BJ (cell line): ENCODE measurements at regions of chr9 and their contacts with region 1.

Region 1: GRCh38 chr9:134648701-134649535 is 7.3 kb downstream of the COL5A1 start:
- DNase-seq: no peak
- H3K4me3 ChIP-seq: no peak overlapping the region
- H3K27me3 ChIP-seq: no peaks in the 10 kb centered on the region
- CTCF ChIP-seq: no peak

Region 2: GRCh38 chr9:134660407-134660806 is 11.5 kb after region 1 on chr9:
- CTCF ChIA-PET with region 1: interaction called, 12 read pairs
- POLR2A ChIA-PET with region 1: interaction called, 4 read pairs
- DNase-seq: no peak
- H3K4me3 ChIP-seq: no peak overlapping the region
- H3K27me3 ChIP-seq: no peaks in the 10 kb centered on the region
- CTCF ChIP-seq: peak; percentile 80